ENCODE measurements at regions of chr5 and their contacts with region 1.

Region 1: DNA sequence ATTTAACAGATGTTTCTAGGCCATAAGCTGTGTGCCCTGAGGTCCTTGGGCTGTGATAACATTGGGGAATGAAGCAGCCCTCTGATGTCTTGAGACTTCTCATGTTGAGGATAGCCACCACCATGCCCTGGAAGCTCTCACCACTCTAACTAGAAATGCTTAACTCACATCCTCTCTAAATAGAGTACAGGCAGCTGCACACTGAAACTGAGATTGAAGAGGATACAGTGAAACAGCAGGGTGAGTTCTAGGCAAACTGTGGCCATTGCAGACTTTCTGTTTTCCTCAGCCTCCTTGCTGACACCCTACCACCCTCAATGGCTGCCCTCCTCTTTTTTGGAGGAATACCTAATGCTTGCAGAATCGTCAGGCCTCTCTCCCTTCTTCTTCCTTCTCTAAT is 22.4 kb downstream of the UTP15 start:
- DNase-seq: no peak
- ATAC-seq: no peak
- H3K4me3 ChIP-seq: no peak overlapping the region
- H3K27ac ChIP-seq: no peak overlapping the region
- H3K4me1 ChIP-seq: no peaks in the 10 kb centered on the region
- H3K27me3 ChIP-seq: no peaks in the 10 kb centered on the region
- CTCF ChIP-seq: no peak

Region 2: GRCh38 chr5:73792687-73793320 is 204.9 kb after region 1 on chr5:
- intact Hi-C with region 1: loop called (anchors 5 kb)
- DNase-seq: peak; percentile 73
- ATAC-seq: peak; percentile 97
- H3K4me3 ChIP-seq: no peak overlapping the region
- H3K27ac ChIP-seq: no peak overlapping the region
- H3K4me1 ChIP-seq: peaks cover 16% of the 10 kb centered on the region
- H3K27me3 ChIP-seq: no peaks in the 10 kb centered on the region
- CTCF ChIP-seq: peak; percentile 97

Measured in upper lobe of right lung (tissue), 1 donor.